ENCODE measurements at regions of chr6 and their contacts with region 1.

Region 1: GRCh38 chr6:16770701-16771569 is 9.7 kb upstream of the ATXN1 start:
- DNase-seq: peak; percentile 24
- H3K4me3 ChIP-seq: no peak overlapping the region
- H3K27ac ChIP-seq: peak overlapping the region in 3 of 4 donors; percentile 8 to 72 (median 67)
- H3K4me1 ChIP-seq: peaks cover 24 to 52% (median 25%) of the 10 kb centered on the region in 3 donors
- H3K27me3 ChIP-seq: no peaks in the 10 kb centered on the region
- CTCF ChIP-seq: peak; percentile 85 to 96 (median 93)
- POLR2A ChIP-seq: no peak

Region 2: GRCh38 chr6:16450821-16451220 is 320.1 kb before region 1 on chr6:
- intact Hi-C with region 1: no loop called
- DNase-seq: no peak
- H3K4me3 ChIP-seq: no peak overlapping the region
- H3K27ac ChIP-seq: no peak overlapping the region
- H3K4me1 ChIP-seq: peaks cover 0 to 21% (median 9%) of the 10 kb centered on the region in 3 donors
- H3K27me3 ChIP-seq: no peaks in the 10 kb centered on the region
- CTCF ChIP-seq: no peak
- POLR2A ChIP-seq: no peak

Region 3: GRCh38 chr6:16964553-16965501 is 193.9 kb after region 1 on chr6:
- intact Hi-C with region 1: loop called (anchors 10 kb)
- DNase-seq: no peak
- H3K4me3 ChIP-seq: peak overlapping the region in 1 of 4 donors; percentile 40
- H3K27ac ChIP-seq: no peak overlapping the region
- H3K4me1 ChIP-seq: peaks cover 6 to 9% (median 6%) of the 10 kb centered on the region in 3 donors
- H3K27me3 ChIP-seq: no peaks in the 10 kb centered on the region
- CTCF ChIP-seq: peak; percentile 45 to 92 (median 90)
- POLR2A ChIP-seq: no peak

Region 4: DNA sequence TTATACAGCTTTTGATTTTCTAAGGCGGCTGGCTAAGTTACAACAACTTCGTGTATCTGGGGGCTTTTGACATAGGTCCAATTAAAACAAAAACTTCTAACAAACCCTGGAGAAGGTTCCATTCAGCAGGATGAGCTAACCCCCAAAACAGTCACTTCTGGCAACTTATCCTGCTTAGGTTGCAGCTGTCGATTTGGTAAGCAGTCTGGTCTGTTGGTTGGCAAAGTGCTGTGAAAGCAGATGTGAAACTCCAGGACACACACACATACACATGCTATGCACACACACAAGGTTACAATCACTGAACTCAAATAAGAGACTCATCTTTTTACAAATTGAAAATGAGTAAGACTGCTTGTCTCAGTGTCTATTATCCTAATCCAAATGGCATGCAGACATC is 211.9 kb after region 1 on chr6:
- intact Hi-C with region 1: no loop called
- DNase-seq: no peak
- H3K4me3 ChIP-seq: no peak overlapping the region
- H3K27ac ChIP-seq: no peak overlapping the region
- H3K4me1 ChIP-seq: peaks cover 0 to 17% (median 8%) of the 10 kb centered on the region in 3 donors
- H3K27me3 ChIP-seq: peaks cover 0 to 12% (median 0%) of the 10 kb centered on the region in 4 donors
- CTCF ChIP-seq: no peak
- POLR2A ChIP-seq: no peak

Region 5: DNA sequence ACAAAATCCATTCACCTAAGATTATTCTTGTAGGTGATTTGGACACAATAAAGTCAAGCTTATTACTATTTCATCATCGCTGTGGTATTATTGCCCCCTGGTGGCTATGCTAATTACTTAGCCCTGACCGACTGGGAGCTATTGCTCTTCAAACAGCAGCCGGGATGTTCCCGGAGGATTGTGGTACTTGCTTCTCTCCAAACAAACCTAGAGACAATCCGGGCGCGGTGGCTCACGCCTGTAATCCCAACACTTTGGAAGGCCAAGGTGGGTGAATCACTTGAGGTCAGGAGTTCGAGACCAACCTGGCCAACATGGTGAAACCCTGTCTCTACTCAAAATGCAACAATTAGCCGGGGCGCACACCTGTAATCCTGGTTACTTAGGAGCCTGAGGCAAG is 315.5 kb after region 1 on chr6:
- intact Hi-C with region 1: loop called (anchors 10 kb)
- DNase-seq: no peak
- H3K4me3 ChIP-seq: no peak overlapping the region
- H3K27ac ChIP-seq: no peak overlapping the region
- H3K4me1 ChIP-seq: peaks cover 0 to 8% (median 0%) of the 10 kb centered on the region in 3 donors
- H3K27me3 ChIP-seq: peaks cover 0 to 4% (median 0%) of the 10 kb centered on the region in 4 donors
- CTCF ChIP-seq: peak; percentile 35 to 85 (median 68)
- POLR2A ChIP-seq: no peak

Measured in esophagus squamous epithelium (tissue), 5 donors.